Activated CD4-positive, alpha-beta T cell treated with anti-CD3 and anti-CD28 coated beads for 36 hours (primary cell): ENCODE measurements at regions of chr6 and their contacts with region 1.

Region 1: GRCh38 chr6:70413114-70413991 is at the start of gene FAM135A:
- DNase-seq: peak; percentile 99
- ATAC-seq: peak; percentile 95
- H3K4me3 Mint-ChIP-seq: peak within 1 kb of the TSS; percentile 82
- H3K27ac Mint-ChIP-seq: peak within 1 kb of the TSS; percentile 89
- H3K4me1 Mint-ChIP-seq: peaks cover 26% of the 10 kb centered on the region
- H3K27me3 Mint-ChIP-seq: peaks cover 2% of the 10 kb centered on the region
- total RNA-seq, gene FAM135A: 7.6 to 7.8 TPM

Region 2: DNA sequence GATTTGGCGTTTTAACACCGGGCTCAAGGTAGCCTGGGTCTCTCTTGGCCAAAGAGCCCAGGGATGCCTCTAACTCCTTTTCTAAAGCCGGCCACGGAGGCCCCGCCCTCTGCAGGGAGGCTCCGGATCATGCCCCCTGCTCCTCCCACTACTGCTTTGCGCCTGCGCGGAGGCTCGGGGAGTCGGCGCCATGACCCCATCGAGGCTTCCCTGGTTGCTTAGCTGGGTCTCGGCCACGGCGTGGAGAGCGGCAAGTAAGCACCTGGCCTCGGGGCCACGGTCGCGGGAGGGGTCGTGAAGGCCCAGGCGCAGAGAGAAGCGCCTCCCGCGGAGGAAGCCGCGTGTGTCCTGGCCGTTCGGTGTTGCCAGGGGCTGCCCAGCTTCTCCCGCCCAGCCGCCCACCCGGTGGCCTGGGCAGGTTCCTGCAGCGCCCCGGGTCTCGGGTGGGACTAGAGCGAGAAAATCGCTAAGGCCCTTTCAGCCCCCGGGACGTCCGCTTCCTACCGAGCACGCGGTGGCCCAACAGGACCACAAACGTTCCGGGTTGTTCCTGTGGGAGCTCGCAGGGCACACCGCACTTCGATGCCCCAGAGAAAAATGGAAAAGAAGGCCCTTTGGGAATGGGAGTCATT is 153.5 kb after region 1 on chr6 and contains the start of gene SDHAF4:
- CTCF ChIA-PET with region 1: interaction called, 4 read pairs
- POLR2A ChIA-PET with region 1: interaction called, 3 read pairs
- intact Hi-C with region 1: loop called (anchors 1 kb)
- DNase-seq: peak; percentile 96
- ATAC-seq: peak; percentile 100
- H3K4me3 Mint-ChIP-seq: peak within 1 kb of the TSS; percentile 78
- H3K27ac Mint-ChIP-seq: peak within 1 kb of the TSS; percentile 82
- H3K4me1 Mint-ChIP-seq: peaks cover 16% of the 10 kb centered on the region
- H3K27me3 Mint-ChIP-seq: no peaks in the 10 kb centered on the region
- total RNA-seq, gene SDHAF4: 15.8 to 17.6 TPM

Region 3: DNA sequence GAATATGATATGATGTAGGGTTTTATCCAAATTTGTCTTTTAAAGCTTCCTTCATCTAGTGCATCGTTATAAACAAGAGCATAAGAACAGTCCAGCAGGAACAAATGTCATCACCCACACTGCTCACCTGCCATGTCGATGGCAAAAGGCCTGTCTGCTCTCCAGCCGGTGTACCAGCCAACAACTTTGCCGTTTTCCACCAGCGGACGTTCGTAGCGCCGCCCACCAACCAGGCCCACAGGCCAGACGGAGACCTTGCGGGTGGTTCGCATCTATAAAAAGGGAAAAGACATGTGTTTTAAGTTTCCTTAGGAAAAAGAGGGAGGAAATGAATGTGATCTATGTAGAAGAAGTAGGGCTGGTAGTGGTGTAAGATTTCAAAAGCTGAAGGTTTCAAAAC is 480.6 kb after region 1 on chr6:
- CTCF ChIA-PET with region 1: no interaction called
- POLR2A ChIA-PET with region 1: no interaction called
- intact Hi-C with region 1: no loop called
- DNase-seq: no peak
- ATAC-seq: no peak
- H3K4me3 Mint-ChIP-seq: no peak overlapping the region
- H3K27ac Mint-ChIP-seq: no peak overlapping the region
- H3K4me1 Mint-ChIP-seq: no peaks in the 10 kb centered on the region
- H3K27me3 Mint-ChIP-seq: peaks cover 3% of the 10 kb centered on the region

Region 4: DNA sequence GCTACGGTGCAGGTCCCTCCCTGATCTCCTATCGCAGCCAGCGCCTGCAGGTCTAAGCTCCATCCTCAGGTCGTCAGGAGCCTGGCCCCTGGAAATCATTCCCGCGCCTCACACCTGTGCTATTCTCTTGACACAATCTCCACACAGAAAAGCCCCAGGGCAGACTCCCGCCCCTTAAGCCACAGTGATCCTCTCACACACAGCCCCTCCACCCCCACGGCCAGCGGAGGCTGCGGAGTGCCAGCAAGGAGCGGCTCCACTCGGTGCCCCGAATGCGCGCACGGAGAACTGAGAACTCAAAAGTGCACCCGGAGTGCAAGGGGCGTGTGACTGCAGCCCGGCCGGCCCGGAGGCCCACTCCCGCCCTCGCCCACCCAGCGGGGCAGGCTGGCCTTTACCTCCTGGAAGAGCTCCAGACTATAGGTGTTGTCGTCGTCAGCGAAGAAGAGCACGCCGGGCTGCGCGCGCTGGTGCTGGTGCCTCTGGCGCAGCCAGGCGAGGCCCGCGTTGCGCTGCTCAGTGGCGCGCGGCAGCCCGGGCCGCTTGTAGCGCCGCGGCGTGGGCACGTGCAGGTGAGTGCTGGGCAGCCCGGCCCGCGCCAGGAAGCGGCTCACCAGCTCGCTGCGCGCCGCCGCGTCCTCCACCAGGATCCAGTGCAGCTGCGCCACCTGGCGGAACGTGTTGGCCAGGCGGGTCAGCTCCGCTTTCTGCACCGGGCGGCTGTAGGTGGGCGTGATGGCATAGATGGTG is 542.3 kb after region 1 on chr6:
- CTCF ChIA-PET with region 1: no interaction called
- POLR2A ChIA-PET with region 1: interaction called, 3 read pairs
- intact Hi-C with region 1: loop called in 1 of 2 experiments (anchors 5 kb)
- DNase-seq: peak; percentile 94
- ATAC-seq: peak; percentile 95
- H3K4me3 Mint-ChIP-seq: peak overlapping the region; percentile 64
- H3K27ac Mint-ChIP-seq: no peak overlapping the region
- H3K4me1 Mint-ChIP-seq: peaks cover 14% of the 10 kb centered on the region
- H3K27me3 Mint-ChIP-seq: peaks cover 52% of the 10 kb centered on the region

Region 5: GRCh38 chr6:71288228-71289001 is 875.1 kb after region 1 on chr6 and contains the start of gene OGFRL1:
- CTCF ChIA-PET with region 1: no interaction called
- POLR2A ChIA-PET with region 1: no interaction called
- intact Hi-C with region 1: loop called in 1 of 2 experiments (anchors 5 kb)
- DNase-seq: peak; percentile 82
- ATAC-seq: peak; percentile 91
- H3K4me3 Mint-ChIP-seq: peak within 1 kb of the TSS; percentile 73
- H3K27ac Mint-ChIP-seq: peak within 1 kb of the TSS; percentile 52
- H3K4me1 Mint-ChIP-seq: peaks cover 28% of the 10 kb centered on the region
- H3K27me3 Mint-ChIP-seq: no peaks in the 10 kb centered on the region
- total RNA-seq, gene OGFRL1: 4.0 to 4.3 TPM